Head of caudate nucleus (tissue), 42 donors: ENCODE measurements at regions of chr3 and their contacts with region 1.

Region 1: DNA sequence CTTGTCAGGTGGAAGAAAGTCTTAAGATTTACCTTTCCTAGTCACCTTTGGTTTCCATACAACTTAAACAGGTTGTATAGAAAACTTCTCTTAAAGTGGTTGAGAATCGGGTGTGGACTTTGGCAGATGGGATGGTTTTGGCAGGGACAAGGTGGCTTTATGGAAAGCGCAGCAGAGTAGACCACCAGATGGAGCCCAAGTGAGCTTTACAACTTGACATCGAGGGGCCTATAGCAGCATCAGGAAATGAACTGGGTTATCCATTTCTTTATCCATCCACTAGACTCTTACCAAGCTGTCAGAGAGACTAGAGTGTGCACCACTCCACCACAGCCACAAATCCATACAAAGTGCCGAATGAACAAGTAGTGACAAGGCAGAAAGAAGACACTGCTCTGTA is 85.3 kb upstream of the MBNL1 start:
- DNase-seq: peak; percentile 5 to 80 (median 46)

Region 2: GRCh38 chr3:152445212-152445611 is 261.7 kb after region 1 on chr3:
- intact Hi-C with region 1: loop called (anchors 5 kb)
- DNase-seq: no peak